ENCODE measurements at regions of chr3 and their contacts with region 1.

Region 1: GRCh38 chr3:15120986-15121385 is 22.0 kb upstream of the RBSN start:
- DNase-seq: no peak
- H3K4me3 ChIP-seq: no peak overlapping the region
- H3K27me3 ChIP-seq: peaks cover 3% of the 10 kb centered on the region
- CTCF ChIP-seq: no peak

Region 2: GRCh38 chr3:14988988-14989394 is 132.0 kb before region 1 on chr3:
- CTCF ChIA-PET with region 1: no interaction called
- POLR2A ChIA-PET with region 1: no interaction called
- DNase-seq: no peak
- H3K4me3 ChIP-seq: no peak overlapping the region
- H3K27me3 ChIP-seq: no peaks in the 10 kb centered on the region
- CTCF ChIP-seq: no peak

Region 3: DNA sequence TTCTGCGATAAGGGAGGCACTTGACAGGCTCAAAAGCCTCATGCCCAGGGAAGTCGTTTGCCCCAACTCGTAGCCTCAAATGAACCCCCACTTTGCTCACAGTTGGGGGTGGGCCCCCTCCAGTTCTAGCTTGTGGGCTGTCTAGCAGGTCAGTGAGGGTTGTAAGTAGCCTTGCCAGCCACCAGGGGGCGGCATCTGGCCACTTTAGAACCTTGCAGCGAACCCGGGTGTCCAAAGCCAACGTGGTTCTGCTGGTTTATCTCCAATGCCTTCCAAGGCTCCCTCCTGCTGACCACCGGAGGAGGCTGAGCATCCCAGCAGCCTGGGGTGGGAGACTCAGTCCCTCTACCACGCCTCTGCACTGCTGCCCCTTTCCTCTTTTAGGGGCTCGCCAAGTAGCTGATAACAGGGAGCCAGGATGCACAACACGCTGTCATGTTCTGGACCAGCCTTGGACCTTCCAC is 12.9 kb before region 1 on chr3:
- CTCF ChIA-PET with region 1: interaction called, 30 read pairs
- POLR2A ChIA-PET with region 1: no interaction called
- DNase-seq: no peak
- H3K4me3 ChIP-seq: no peak overlapping the region
- H3K27me3 ChIP-seq: no peaks in the 10 kb centered on the region
- CTCF ChIP-seq: peak; percentile 97